Cardiac septum (tissue), 1 donor: ENCODE measurements at regions of chr4 and their contacts with region 1.

Region 1: DNA sequence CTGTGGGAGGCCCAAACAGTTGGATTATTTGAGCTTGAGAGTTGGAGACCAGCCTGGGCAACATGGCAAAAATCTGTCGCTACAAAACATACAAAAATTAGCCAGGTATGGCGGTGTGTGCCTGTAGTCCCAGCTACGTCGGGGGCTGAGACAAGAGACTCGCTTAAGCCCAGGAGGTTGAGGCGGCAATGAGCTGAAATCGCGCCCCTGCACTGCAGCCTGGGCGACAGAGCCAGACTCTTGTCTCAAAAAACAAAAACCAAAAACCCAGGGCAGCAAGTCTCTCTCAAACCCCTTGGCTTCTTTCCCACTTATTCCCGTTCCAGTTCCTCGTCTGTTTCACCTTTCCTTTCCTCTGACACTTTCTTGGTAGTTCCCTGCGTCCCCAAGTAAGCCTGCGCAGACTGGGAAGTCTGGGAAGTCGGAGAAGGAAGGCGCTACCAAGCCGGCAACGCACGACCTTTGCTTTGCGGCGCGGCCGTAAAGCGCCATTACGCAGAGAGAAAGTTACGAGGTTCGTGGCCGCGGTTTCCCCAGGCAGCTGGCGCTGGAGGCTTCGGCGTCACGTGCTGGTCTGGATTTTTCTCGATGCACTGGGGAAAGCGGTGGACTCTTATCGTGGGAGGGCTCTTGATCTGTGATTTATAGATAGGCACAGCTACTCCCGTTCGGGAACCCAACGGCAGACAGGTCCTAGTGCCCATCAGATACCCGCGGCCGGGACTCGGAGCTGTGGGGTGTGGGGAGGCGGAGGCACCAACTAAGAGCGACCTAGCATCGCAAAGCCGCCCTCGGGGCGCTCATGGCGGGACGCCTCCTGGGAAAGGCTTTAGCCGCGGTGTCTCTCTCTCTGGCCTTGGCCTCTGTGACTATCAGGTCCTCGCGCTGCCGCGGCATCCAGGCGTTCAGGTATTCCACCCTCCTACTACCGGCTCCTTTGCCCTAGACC is at the start of gene NUDT9:
- DNase-seq: peak; percentile 96
- total RNA-seq, gene NUDT9: 21.5 TPM

Region 2: GRCh38 chr4:87390891-87391575 is 31.3 kb before region 1 on chr4 and contains the start of gene HSD17B11:
- intact Hi-C with region 1: loop called (anchors 1 kb)
- DNase-seq: peak; percentile 97
- total RNA-seq, gene HSD17B11: 11.0 TPM

Region 3: GRCh38 chr4:87697272-87697671 is 274.9 kb after region 1 on chr4:
- intact Hi-C with region 1: no loop called
- DNase-seq: no peak